ENCODE measurements at regions of chr15 and their contacts with region 1.

Region 1: DNA sequence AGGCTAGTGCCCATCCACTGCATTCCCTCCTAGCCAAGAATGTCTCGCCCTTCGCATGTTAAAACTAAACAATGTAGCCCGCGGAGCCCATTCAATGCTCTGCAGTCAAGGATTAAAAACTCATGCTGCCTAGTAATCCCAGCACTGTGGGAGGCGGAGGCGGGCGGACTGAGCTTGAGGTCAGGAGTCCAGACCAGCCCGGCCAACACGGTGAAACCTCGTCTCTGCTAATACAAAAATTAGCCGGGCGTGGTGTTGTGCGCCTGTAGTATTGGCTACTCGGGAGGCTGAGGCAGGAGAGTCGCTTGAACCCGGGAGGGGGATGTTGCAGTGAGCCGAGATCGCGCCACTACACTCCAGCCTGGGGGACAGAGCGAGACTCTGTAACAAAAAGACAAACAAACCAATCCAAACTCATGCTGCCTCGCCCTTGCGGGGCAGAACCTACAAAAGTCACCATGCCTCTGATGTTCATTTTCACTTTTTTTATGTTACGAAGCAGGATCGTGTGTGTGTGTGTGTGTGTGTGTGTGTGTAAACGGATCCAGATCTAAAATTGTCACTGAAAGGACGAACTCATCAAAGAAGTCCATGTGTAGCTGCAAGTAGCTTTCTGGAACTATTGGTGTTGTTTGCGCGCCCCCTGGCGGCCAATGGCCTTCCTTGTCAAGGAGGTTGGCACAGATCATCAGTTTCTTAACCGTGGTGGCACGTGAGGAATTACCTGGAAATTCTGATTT is 54.8 kb upstream of the SPESP1 start:
- DNase-seq: peak; percentile 56
- H3K4me3 ChIP-seq: peak overlapping the region; percentile 56
- CTCF ChIP-seq: peak; percentile 87

Region 2: DNA sequence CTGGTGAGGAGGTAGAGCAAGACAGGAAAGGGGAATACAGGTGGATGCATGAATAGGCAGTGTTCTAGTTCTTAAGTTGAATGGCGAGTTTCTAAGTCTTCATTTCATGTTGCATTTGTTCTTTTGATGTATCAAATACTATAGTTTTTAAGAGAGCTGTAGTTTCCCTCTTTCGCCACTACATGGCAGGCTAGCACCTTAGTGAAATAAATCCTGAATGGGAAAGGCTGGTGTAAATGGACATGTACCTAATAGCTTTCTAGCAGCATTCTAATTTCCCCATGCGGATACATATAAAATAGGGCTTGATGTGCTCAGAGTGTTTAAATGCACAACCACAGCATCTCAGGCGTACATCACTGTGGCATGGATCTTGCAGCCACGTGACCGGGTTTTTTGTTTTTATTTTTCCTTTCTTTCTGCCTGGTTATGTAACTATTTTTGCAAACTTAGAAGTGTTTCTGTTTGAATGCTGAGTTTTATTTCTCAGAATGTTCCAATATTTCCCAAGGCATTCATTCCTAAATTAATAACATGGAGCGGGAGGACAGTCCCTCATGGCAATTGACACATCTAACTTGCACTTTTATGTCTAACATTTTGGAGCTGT is 622.5 kb before region 1 on chr15:
- CTCF ChIA-PET with region 1: interaction called, 20 read pairs
- POLR2A ChIA-PET with region 1: no interaction called
- DNase-seq: no peak
- H3K4me3 ChIP-seq: no peak overlapping the region
- CTCF ChIP-seq: peak; percentile 69

Region 3: GRCh38 chr15:68550481-68551295 is 324.9 kb before region 1 on chr15:
- CTCF ChIA-PET with region 1: interaction called, 94 read pairs
- POLR2A ChIA-PET with region 1: no interaction called
- DNase-seq: no peak
- H3K4me3 ChIP-seq: no peak overlapping the region
- CTCF ChIP-seq: peak; percentile 80

Region 4: DNA sequence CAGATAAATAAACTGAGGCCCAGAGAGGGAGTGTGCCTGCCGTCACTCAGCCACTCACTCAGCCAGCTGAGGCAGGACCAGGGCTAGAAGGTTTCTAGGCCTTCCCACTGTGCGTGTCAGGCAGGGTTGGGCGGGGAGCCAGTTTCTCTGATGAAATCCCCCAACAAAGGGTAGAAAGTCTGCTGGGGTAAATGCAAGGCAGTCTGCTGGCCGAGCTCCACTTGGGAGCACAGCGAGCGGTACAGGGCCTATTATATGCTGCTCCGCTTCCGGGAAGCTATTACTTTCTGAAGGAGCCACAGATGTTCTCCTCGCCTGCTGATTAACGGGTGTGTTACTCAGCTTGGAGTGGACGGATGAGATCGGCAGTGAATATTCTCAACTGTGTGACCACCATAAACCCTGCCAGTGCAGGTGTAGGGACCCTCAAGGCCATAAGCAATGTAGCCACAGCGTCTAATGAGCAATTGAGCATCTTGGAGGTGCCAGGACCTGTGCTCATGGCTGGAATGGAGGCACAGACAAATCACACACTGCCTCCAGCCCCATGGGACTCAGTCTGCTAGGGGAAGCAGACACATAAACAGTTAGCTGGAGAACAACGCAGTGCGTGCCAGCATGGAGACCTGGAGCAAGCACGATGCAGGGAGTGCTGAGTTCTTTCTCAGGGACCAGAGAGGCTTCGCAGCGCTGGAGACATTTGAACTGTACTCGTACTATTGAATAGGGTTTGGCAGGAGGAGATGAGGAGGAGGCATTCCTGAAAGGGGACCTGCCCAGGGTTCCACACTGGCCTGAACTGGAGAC is 254.6 kb before region 1 on chr15:
- CTCF ChIA-PET with region 1: no interaction called
- POLR2A ChIA-PET with region 1: no interaction called
- DNase-seq: peak; percentile 81
- H3K4me3 ChIP-seq: no peak overlapping the region
- CTCF ChIP-seq: no peak

Region 5: GRCh38 chr15:68679961-68680371 is 195.6 kb before region 1 on chr15:
- CTCF ChIA-PET with region 1: interaction called, 48 read pairs
- POLR2A ChIA-PET with region 1: no interaction called
- DNase-seq: no peak
- H3K4me3 ChIP-seq: no peak overlapping the region
- CTCF ChIP-seq: no peak

Region 6: DNA sequence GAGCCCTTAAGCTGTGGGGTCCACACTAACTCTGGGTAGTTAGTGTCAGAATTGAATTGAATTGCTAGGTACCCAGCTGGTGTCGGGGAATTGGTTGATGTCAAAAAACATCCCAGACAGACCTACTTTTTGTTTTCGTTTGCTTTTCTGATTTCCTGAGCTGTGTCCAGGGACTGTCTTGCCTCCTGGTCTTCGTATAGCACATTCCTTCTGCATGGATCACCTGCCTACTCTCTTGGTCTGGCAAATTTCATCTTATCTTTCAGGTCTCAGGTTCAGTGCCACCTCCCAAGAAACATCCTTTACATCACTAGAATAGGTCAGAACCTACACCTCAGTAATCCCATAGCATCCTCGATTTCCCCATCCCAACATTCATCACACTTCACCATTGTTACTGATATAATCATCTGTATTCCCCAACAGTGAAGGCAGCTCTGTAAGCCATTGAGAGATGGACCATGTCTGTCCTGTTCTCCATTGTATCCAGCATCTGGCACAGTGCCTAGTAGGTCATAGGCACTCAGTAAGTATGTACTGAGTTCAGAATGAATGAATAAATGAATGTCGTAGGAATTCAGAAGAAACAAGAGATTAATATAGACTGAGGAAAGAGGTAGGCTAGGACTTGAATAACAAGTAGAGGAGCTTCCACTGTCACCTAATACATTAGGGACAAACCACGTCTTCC is 136.0 kb before region 1 on chr15:
- CTCF ChIA-PET with region 1: interaction called, 12 read pairs
- POLR2A ChIA-PET with region 1: no interaction called
- DNase-seq: no peak
- H3K4me3 ChIP-seq: no peak overlapping the region
- CTCF ChIP-seq: no peak

Region 7: DNA sequence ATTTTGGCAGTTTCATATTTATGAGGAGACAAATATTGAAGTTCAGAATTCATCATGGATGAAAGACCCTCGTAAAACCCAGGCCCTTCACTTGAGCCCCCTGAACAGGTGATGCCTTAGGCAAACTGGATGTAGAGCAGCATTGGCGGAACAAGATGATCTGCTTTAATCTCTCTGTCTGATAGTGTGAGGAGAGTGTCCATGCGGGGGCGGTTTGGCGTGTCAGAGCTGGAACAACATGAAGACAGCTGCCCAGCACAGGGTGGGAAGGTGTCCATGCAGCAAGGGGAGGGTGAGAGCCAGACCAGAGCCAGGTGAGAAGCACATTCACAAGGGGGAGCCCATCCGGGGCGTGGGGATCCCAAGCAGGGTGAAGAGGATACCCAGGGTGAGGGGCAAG is 23.1 kb before region 1 on chr15:
- CTCF ChIA-PET with region 1: interaction called, 18 read pairs
- POLR2A ChIA-PET with region 1: no interaction called
- DNase-seq: no peak
- H3K4me3 ChIP-seq: no peak overlapping the region
- CTCF ChIP-seq: no peak

Region 8: GRCh38 chr15:68909601-68910100 is 34.1 kb after region 1 on chr15:
- CTCF ChIA-PET with region 1: interaction called, 11 read pairs
- POLR2A ChIA-PET with region 1: no interaction called
- DNase-seq: no peak
- H3K4me3 ChIP-seq: no peak overlapping the region
- CTCF ChIP-seq: no peak

Region 9: DNA sequence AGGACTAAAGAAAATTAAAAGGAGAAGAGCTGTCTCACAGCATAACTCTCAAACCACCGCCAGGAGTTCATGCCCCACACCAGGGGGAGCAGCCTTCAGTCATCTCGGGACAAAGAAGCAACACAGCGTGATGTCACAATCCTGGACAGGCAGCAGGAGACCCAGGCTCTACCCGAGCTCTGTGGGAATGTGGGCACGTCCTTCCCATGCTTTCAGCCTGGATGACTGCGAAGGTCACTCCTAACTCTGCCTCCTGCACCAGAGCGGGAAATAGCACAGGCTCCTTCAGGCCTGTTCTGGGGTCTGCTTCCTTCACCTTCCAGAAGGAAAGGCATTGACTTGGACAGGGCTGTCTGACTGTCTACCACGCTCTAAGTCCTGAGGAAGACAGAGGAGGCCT is 170.3 kb after region 1 on chr15:
- CTCF ChIA-PET with region 1: no interaction called
- POLR2A ChIA-PET with region 1: no interaction called
- DNase-seq: no peak
- H3K4me3 ChIP-seq: no peak overlapping the region
- CTCF ChIP-seq: peak; percentile 30

Region 10: GRCh38 chr15:69081310-69082004 is 205.9 kb after region 1 on chr15:
- CTCF ChIA-PET with region 1: no interaction called
- POLR2A ChIA-PET with region 1: no interaction called
- DNase-seq: no peak
- H3K4me3 ChIP-seq: no peak overlapping the region
- CTCF ChIP-seq: no peak